HAP-1 (cell line): ENCODE measurements at regions of chr19 and their contacts with region 1.

Region 1: DNA sequence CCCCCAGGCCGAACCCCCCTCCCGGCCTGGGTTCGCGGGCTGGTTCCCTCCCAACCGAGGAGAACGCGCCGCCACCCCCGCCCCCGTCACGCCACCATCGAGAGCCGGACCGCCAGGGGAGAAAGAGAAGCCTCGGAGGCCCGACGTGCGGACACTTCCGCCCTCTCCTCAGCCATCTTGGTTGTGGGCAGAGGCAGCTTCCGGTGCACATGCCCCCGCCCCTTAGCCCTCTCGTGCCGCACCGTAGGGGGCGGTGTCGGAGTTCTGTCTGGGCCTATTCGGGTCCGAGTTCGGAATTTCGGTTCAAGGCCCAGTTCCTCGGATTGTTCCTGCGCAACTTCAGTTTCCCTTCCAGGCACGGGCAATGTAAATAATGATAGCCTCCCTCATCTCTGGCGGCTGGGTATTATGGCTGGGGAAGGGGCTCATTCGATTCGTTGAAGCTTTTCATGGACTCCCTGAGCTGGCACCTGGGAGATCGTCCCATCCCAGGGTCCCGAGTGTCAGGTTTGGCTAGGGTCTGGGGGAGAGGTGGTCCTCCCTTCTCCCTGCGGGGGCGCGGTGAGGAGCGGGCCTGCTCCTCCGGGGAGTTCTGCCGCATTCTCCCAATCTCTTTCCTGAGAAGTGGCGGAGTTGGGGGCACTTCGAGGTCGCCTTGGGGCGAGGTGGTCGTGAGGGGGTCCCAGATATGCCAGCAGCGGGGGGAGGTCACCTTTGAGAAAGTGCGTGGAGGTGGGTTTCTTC is at the starts of genes IER2 and STX10:
- DNase-seq: peak; percentile 94
- H3K4me3 ChIP-seq: peak within 1 kb of the TSS; percentile 97
- H3K4me1 ChIP-seq: peaks cover 5% of the 10 kb centered on the region
- H3K27me3 ChIP-seq: no peaks in the 10 kb centered on the region

Region 2: GRCh38 chr19:13277104-13277809 is 126.9 kb after region 1 on chr19:
- in situ Hi-C with region 1: no loop called
- DNase-seq: peak; percentile 71 to 78
- H3K4me3 ChIP-seq: no peak overlapping the region
- H3K4me1 ChIP-seq: no peaks in the 10 kb centered on the region
- H3K27me3 ChIP-seq: peaks cover 3% of the 10 kb centered on the region; the same call in 1 of the 2 replicates

Region 3: GRCh38 chr19:14006243-14006765 is 855.9 kb after region 1 on chr19 and contains the start of gene RFX1:
- in situ Hi-C with region 1: loop called (anchors 25 kb)
- DNase-seq: peak; percentile 99 to 100
- H3K4me3 ChIP-seq: peak within 1 kb of the TSS; percentile 67
- H3K4me1 ChIP-seq: peaks cover 7% of the 10 kb centered on the region; the same call in 1 of the 2 replicates
- H3K27me3 ChIP-seq: no peaks in the 10 kb centered on the region